ENCODE measurements at regions of chr17 and their contacts with region 1.

Region 1: GRCh38 chr17:21451975-21452374 is 75.8 kb downstream of the KCNJ12 start:
- DNase-seq: no peak
- ATAC-seq: no peak
- H3K4me3 ChIP-seq: peak overlapping the region; percentile 62
- H3K27ac ChIP-seq: no peak overlapping the region
- H3K4me1 ChIP-seq: peaks cover 4% of the 10 kb centered on the region
- H3K27me3 ChIP-seq: no peaks in the 10 kb centered on the region
- CTCF ChIP-seq: no peak

Region 2: DNA sequence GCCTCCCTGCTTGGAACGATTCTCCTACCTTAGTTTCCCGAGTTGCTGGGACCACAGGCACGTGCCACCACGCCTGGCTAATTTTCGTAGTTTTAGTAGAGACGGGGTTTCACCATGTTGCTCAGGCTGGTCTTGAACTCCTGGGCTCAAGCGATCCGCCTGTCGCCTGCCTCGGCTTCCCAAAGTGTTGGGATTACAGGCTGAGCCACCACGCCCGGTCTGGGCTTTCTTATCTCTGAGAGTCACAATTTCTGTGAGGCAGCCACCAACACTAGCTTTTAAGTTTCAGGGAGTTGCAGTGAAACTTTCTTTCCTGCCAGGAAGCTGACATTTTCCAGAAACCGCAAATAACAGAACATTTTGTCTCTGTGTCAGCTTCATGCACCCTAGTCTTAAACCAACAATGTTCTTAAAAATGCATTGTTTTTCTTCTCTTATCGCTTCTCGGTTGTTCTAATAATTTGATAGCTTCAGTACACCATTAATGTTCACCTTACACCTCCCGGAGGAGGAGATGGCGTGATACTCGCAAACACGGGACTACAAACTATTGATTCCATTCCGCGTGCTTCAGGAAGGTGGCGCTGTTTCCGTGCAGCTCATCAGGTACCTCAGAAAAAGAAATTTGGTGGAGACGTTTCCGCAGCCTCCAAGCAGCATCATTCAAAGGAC is 332.6 kb before region 1 on chr17:
- intact Hi-C with region 1: loop called (anchors 2 to 10 kb)
- DNase-seq: peak; percentile 65 to 74
- ATAC-seq: peak; percentile 65 to 88 (median 72)
- H3K4me3 ChIP-seq: no peak overlapping the region
- H3K27ac ChIP-seq: no peak overlapping the region
- H3K4me1 ChIP-seq: no peaks in the 10 kb centered on the region
- H3K27me3 ChIP-seq: no peaks in the 10 kb centered on the region
- CTCF ChIP-seq: peak; percentile 84

Region 3: GRCh38 chr17:21419299-21420239 is 32.4 kb before region 1 on chr17:
- intact Hi-C with region 1: no loop called
- DNase-seq: no peak
- ATAC-seq: no peak
- H3K4me3 ChIP-seq: no peak overlapping the region
- H3K27ac ChIP-seq: no peak overlapping the region
- H3K4me1 ChIP-seq: no peaks in the 10 kb centered on the region
- H3K27me3 ChIP-seq: no peaks in the 10 kb centered on the region
- CTCF ChIP-seq: no peak

Measured in psoas muscle (tissue), 8 donors.